ENCODE measurements at regions of chr17 and their contacts with region 1.

Region 1: DNA sequence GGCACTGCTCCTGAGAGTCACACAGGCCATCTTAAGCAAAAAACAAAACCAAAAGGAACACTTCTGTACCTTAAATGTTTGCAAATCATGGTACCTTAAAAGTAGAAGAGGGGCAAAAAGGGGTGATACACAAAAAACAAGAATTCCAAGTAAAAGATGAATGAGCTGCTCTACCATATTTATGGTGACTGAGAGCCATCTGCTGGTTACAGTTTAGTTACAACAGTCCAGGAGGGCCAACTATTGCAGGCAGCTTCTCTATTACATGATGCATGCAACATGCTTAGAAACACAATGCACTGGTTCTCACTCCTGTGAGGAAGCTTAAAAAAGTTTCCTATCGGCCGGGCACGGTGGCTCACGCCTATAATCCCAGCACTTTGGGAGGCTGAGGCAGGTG is 53.5 kb downstream of the STX8 start:
- DNase-seq: peak; percentile 49
- H3K4me3 ChIP-seq: no peak overlapping the region; a peak in 1 of 4 replicates
- H3K27ac ChIP-seq: no peak overlapping the region
- H3K4me1 ChIP-seq: no peaks in the 10 kb centered on the region; a peak in 1 of 4 replicates
- H3K27me3 ChIP-seq: no peaks in the 10 kb centered on the region
- CTCF ChIP-seq: peak; percentile 66
- EP300 ChIP-seq: no peak
- RAD21 ChIP-seq: peak; percentile 81

Region 2: GRCh38 chr17:8997994-8998628 is 524.0 kb before region 1 on chr17:
- CTCF ChIA-PET with region 1: interaction called, 29 read pairs
- POLR2A ChIA-PET with region 1: no interaction called
- DNase-seq: peak; percentile 62
- H3K4me3 ChIP-seq: no peak overlapping the region; a peak in 1 of 4 replicates
- H3K27ac ChIP-seq: no peak overlapping the region
- H3K4me1 ChIP-seq: no peaks in the 10 kb centered on the region
- H3K27me3 ChIP-seq: no peaks in the 10 kb centered on the region; the same call in 1 of the 2 replicates
- CTCF ChIP-seq: peak; percentile 87
- EP300 ChIP-seq: no peak
- RAD21 ChIP-seq: peak; percentile 58